PC-3 (cell line): ENCODE measurements at regions of chr5 and their contacts with region 1.

Region 1: GRCh38 chr5:96344678-96345577 is 88.1 kb downstream of the PCSK1 start:
- DNase-seq: peak; percentile 85
- ATAC-seq: peak; percentile 90
- H3K4me3 ChIP-seq: no peak overlapping the region
- H3K27ac ChIP-seq: peak overlapping the region; percentile 31; the same call in 1 of the 2 replicates
- H3K4me1 ChIP-seq: peaks cover 26% of the 10 kb centered on the region
- H3K27me3 ChIP-seq: no peaks in the 10 kb centered on the region
- CTCF ChIP-seq: peak; percentile 68

Region 2: GRCh38 chr5:95794070-95794516 is 550.8 kb before region 1 on chr5:
- CTCF ChIA-PET with region 1: no interaction called
- POLR2A ChIA-PET with region 1: interaction called, 17 read pairs
- intact Hi-C with region 1: no loop called
- DNase-seq: no peak
- ATAC-seq: no peak
- H3K4me3 ChIP-seq: no peak overlapping the region
- H3K27ac ChIP-seq: no peak overlapping the region
- H3K4me1 ChIP-seq: no peaks in the 10 kb centered on the region
- H3K27me3 ChIP-seq: no peaks in the 10 kb centered on the region
- CTCF ChIP-seq: no peak

Region 3: GRCh38 chr5:96439477-96440184 is 94.7 kb after region 1 on chr5:
- CTCF ChIA-PET with region 1: no interaction called
- POLR2A ChIA-PET with region 1: no interaction called
- intact Hi-C with region 1: loop called (anchors 5 kb)
- DNase-seq: peak; percentile 2
- ATAC-seq: no peak
- H3K4me3 ChIP-seq: no peak overlapping the region
- H3K27ac ChIP-seq: no peak overlapping the region
- H3K4me1 ChIP-seq: no peaks in the 10 kb centered on the region
- H3K27me3 ChIP-seq: peaks cover 13% of the 10 kb centered on the region; the same call in 1 of the 2 replicates
- CTCF ChIP-seq: peak; percentile 40; the same call in 1 of the 2 replicates

Region 4: GRCh38 chr5:96601811-96602244 is 256.9 kb after region 1 on chr5:
- CTCF ChIA-PET with region 1: interaction called, 9 read pairs
- POLR2A ChIA-PET with region 1: no interaction called
- intact Hi-C with region 1: loop called (anchors 1 kb)
- DNase-seq: peak; percentile 84
- ATAC-seq: peak; percentile 72
- H3K4me3 ChIP-seq: no peak overlapping the region
- H3K27ac ChIP-seq: no peak overlapping the region
- H3K4me1 ChIP-seq: peaks cover 9% of the 10 kb centered on the region
- H3K27me3 ChIP-seq: no peaks in the 10 kb centered on the region
- CTCF ChIP-seq: peak; percentile 75

Region 5: GRCh38 chr5:96687812-96688453 is 343.0 kb after region 1 on chr5:
- CTCF ChIA-PET with region 1: no interaction called
- POLR2A ChIA-PET with region 1: no interaction called
- intact Hi-C with region 1: loop called (anchors 5 kb)
- DNase-seq: peak; percentile 57
- ATAC-seq: peak; percentile 84
- H3K4me3 ChIP-seq: peak overlapping the region; percentile 48
- H3K27ac ChIP-seq: 0 out of 2 replicates have a peak overlapping the region, but pooled peaks have one; percentile 1
- H3K4me1 ChIP-seq: peaks cover 5% of the 10 kb centered on the region
- H3K27me3 ChIP-seq: no peaks in the 10 kb centered on the region
- CTCF ChIP-seq: peak; percentile 71

Region 6: DNA sequence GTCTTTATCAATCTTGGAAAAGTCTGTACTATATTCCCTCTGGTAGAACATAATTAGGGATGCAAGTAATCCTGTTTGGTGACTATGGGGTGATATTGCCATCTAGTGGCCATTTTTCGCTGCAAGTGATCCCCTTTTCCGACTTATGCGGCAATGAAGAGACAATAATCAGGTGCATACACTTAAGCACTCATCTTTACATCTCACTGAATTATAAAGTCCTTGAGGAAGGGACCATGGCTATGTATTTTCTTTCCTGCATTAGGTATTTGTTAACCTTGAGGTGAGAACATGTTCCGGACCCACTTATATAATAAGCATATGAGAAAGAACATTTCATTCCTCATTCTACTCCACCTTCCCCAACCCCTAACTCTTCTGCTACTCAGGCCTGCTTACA is 817.1 kb after region 1 on chr5:
- CTCF ChIA-PET with region 1: no interaction called
- POLR2A ChIA-PET with region 1: no interaction called
- intact Hi-C with region 1: loop called (anchors 10 kb)
- DNase-seq: peak; percentile 87
- ATAC-seq: peak; percentile 84
- H3K4me3 ChIP-seq: no peak overlapping the region
- H3K27ac ChIP-seq: no peak overlapping the region
- H3K4me1 ChIP-seq: 0 out of 2 replicates have a peak, but pooled peaks cover 4% of the 10 kb centered on the region
- H3K27me3 ChIP-seq: no peaks in the 10 kb centered on the region
- CTCF ChIP-seq: peak; percentile 94